ENCODE measurements at regions of chr17 and their contacts with region 1.

Region 1: GRCh38 chr17:69327060-69327831 is at the start of gene ABCA5:
- DNase-seq: peak; percentile 52 to 91 (median 82)
- H3K4me3 ChIP-seq: peak within 1 kb of the TSS; percentile 59 to 92 (median 84)
- H3K27ac ChIP-seq: peak within 1 kb of the TSS; percentile 24 to 94 (median 87)
- H3K27me3 ChIP-seq: no peaks in the 10 kb centered on the region
- CTCF ChIP-seq: peak in 10 of 56 donors; percentile 11 to 44 (median 15)
- total RNA-seq, gene ABCA5: 45.0 to 118 (median 84.0) TPM

Region 2: DNA sequence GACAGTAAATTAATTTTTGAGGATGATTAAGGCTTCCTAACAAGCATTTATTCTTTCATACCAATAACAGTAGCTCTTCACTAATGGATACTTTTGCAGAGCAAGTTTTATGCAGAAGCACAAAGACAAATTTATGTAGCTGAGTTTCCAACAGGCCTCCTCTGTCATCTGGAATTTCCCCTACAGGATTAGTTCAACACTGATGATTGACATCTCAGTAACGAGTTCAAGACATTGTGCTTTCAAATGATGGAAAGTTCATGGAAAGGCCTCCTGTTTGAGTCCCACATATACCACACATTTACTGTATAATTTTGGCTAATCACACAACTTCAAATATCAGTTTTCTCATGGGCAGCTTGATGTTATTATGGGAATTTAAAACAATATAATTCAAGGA is 139.2 kb before region 1 on chr17:
- intact Hi-C with region 1: no loop called
- DNase-seq: no peak
- H3K4me3 ChIP-seq: no peak overlapping the region
- H3K27ac ChIP-seq: no peak overlapping the region
- H3K27me3 ChIP-seq: no peaks in the 10 kb centered on the region
- CTCF ChIP-seq: no peak

Region 3: GRCh38 chr17:69250641-69251040 is 76.6 kb before region 1 on chr17:
- intact Hi-C with region 1: no loop called
- DNase-seq: no peak
- H3K4me3 ChIP-seq: no peak overlapping the region
- H3K27ac ChIP-seq: no peak overlapping the region
- H3K27me3 ChIP-seq: no peaks in the 10 kb centered on the region
- CTCF ChIP-seq: no peak

Region 4: GRCh38 chr17:69414408-69415274 is 87.4 kb after region 1 on chr17 and contains the start of gene MAP2K6:
- intact Hi-C with region 1: loop called in 1 of 2 experiments (anchors 10 kb)
- DNase-seq: peak; percentile 79 to 91 (median 88)
- H3K4me3 ChIP-seq: peak within 1 kb of the TSS; percentile 48 to 86 (median 72)
- H3K27ac ChIP-seq: peak within 1 kb of the TSS in 37 of 59 donors; percentile 2 to 78 (median 55)
- H3K27me3 ChIP-seq: peaks cover 0 to 2% (median 0%) of the 10 kb centered on the region in 45 donors
- CTCF ChIP-seq: peak in 14 of 56 donors; percentile 6 to 39 (median 14)
- total RNA-seq, gene MAP2K6: 9.1 to 26.7 (median 17.7) TPM

Region 5: DNA sequence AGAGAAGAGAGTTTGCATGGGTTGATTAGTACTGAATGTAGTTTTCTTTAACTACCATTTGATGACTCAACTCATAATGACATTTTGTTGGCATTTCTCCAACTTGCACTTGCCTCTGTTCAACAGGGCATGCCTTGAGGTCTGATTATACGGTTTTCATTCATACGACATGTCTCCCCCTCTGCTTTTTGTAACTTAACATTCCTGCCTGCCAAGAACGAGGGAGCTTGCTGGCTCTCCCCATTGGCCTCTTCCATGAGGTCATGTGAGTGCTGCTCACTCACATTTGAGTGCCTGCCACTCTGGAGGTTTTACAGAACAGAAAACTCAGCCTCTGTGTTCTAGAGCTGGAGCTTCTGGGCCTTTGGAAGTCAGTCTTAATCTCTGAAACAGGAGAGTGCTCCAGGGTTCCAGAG is 106.9 kb after region 1 on chr17:
- intact Hi-C with region 1: no loop called
- DNase-seq: no peak
- H3K4me3 ChIP-seq: no peak overlapping the region
- H3K27ac ChIP-seq: peak overlapping the region in 13 of 59 donors; percentile 1 to 62 (median 21)
- H3K27me3 ChIP-seq: no peaks in the 10 kb centered on the region
- CTCF ChIP-seq: no peak

Region 6: DNA sequence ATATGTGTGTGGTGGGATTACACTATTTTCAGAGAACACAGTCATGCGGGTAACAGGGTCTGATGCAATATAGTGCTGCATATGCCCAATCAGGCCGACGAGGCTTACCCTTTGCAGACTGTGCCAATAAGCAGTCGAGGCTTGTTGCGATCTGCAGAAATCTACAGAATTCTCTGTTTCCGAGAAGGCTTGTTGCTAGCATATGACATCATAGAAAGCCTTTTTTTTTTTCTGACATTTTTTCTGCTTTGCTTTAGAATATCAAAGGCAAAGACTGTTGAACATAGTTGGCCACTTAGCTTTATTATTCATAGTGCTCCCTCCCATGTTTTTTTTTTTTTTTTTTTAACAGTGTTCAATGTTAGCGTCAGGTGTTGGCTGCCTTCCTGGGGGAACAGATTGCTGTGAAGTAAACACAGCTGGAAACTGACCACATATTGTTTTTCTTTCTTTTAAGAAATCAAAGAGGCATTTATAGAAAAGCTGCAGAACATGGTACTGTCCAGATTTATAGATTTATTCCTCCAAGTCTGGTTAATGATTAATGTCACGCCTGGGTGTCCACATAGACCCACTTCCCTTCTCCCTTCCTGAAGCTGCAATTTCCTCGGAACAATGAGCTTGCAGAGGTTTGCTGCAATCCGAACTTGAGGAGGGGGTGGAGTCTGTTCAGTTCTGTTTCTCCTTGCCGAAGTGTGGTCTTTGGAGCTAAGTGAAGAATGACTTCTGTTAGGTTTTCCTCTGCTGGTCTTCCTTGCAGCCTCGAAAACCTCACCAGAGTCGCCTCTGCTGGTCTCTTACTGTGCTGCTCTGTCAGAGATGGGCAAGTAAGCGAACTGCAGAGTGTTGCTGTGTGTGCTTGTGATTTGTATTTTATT is 174.6 kb after region 1 on chr17:
- intact Hi-C with region 1: loop called in 1 of 2 experiments (anchors 5 kb)
- DNase-seq: peak in 5 of 10 donors; percentile 16 to 64 (median 46)
- H3K4me3 ChIP-seq: peak overlapping the region in 58 of 59 donors; percentile 16 to 65 (median 43)
- H3K27ac ChIP-seq: peak overlapping the region in 58 of 59 donors; percentile 18 to 90 (median 78)
- H3K27me3 ChIP-seq: no peaks in the 10 kb centered on the region
- CTCF ChIP-seq: peak in 5 of 56 donors; percentile 5 to 16 (median 6)

Region 7: DNA sequence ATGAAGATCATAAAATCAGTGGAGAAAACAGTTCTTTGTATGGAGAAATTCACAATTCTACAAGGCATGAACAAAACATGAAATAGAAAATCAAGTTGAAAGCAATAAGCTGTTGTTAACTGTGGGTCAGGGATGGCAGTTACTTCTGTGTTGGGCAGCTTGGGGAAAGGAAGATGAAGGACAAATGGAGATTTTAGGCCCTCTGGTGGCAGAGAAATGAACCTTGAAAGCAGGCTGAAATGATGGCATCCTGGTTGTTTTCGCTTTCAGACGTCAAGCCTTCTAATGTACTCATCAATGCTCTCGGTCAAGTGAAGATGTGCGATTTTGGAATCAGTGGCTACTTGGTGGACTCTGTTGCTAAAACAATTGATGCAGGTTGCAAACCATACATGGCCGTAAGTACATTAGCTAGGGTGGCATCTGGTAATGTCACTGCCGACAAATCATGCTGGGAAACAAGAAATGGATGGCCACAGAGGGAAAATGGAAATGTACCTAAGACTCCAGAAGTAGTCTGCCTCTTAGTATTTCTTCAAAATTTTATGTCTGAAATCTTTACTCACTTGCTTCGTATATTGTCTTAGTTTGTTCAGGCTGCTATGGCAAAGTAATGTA is 196.1 kb after region 1 on chr17:
- intact Hi-C with region 1: loop called (anchors 5 kb)
- DNase-seq: peak in 2 of 10 donors; percentile 42 to 48
- H3K4me3 ChIP-seq: peak overlapping the region in 21 of 59 donors; percentile 7 to 49 (median 24)
- H3K27ac ChIP-seq: peak overlapping the region in 27 of 59 donors; percentile 0 to 78 (median 36)
- H3K27me3 ChIP-seq: no peaks in the 10 kb centered on the region
- CTCF ChIP-seq: peak; percentile 65 to 92 (median 81)

Region 8: DNA sequence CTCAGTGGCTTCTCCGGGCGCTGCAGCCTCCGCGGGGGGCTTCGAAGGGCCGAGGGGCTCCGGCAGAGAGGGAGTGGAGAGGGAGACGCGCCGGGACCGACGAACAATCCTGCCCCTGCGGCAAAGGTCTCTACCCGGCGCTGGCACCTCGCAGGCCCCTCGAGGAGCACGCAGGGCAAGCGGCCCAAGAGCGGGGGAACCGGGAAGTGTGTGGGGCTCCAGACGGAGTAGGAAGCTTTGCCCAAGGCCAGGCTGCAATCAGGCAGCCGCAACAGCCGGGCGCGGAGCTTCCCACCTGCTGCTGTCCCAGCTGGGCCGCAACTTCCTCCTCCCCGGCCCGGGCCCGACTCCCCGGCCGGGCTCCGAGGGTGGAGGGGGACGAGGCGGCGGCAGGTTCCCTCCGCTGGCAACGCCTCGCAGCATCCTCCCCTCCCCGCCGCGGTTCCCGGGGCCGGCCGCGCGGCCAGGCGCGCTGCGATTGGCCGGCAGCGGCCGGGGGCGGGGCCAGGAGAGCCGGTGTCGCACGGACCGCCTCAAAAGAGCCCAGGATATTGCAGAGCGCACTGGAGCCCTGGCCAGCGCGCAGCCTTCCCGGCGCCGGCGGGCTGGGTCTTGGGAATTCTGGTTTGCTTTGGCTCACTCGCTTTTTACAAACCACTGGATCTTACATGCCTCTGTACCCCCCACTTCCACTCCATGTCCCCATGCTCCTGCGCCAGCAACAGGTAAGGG is 841.9 kb after region 1 on chr17 and contains the start of gene KCNJ2:
- intact Hi-C with region 1: loop called in 1 of 2 experiments (anchors 5 kb)
- DNase-seq: peak; percentile 43 to 94 (median 89)
- H3K4me3 ChIP-seq: peak within 1 kb of the TSS; percentile 59 to 96 (median 83)
- H3K27ac ChIP-seq: peak within 1 kb of the TSS; percentile 85 to 99 (median 95)
- H3K27me3 ChIP-seq: no peaks in the 10 kb centered on the region
- CTCF ChIP-seq: peak in 13 of 56 donors; percentile 1 to 34 (median 7)
- total RNA-seq, gene KCNJ2: 7.8 to 66.9 (median 21.8) TPM

Region 9: DNA sequence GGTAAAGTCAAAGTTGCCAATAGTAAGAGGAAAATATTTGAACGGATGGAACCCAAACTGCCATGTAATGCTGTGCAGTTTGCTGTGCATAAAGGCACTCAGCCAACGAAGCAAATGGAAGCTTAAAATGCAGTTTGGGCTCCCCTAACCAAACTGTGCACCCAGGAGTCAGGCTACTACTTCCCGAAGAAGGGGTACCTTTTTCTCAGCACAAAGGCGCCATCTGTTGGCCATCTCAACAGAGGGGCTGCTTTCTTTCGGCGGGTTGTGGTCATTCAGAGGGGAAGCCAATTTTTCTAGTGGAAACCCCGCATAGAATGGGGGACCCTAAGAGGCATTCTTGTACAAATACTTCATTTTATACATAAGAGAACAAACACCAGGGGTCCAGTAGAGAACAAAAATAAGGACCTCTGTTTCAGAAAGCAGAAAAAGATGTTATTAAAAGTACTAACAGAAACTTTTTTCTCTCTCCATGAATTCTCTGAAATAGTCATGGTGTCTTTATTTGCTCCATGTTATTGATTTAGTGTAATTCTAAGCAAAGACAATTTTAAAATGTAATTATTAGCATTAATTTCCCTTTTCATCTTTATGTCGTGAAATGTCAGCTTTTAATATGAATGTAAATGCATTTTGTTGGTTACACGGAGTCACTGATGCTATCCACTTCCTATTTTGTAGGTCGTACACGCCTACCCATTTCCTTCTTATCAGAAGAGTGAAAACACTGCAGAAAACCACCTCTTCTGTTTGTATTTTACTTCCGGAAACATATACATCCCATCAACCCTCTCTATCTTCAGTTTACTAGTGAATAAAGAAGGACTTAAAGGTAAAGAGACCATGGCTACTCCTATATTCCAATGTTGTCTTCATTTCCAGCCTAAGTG is 1295.4 kb after region 1 on chr17:
- intact Hi-C with region 1: loop called (anchors 10 kb)
- DNase-seq: peak; percentile 14 to 87 (median 76)
- H3K4me3 ChIP-seq: peak overlapping the region in 36 of 59 donors; percentile 1 to 53 (median 24)
- H3K27ac ChIP-seq: peak overlapping the region; percentile 2 to 93 (median 84)
- H3K27me3 ChIP-seq: no peaks in the 10 kb centered on the region
- CTCF ChIP-seq: peak; percentile 43 to 95 (median 79)

Measured in dorsolateral prefrontal cortex (tissue), 120 donors.